Natural killer cell (primary cell): ENCODE measurements at regions of chr19 and their contacts with region 1.

Region 1: GRCh38 chr19:39212375-39212742 is 8.3 kb upstream of the SYCN start:
- DNase-seq: peak; percentile 51 to 76
- ATAC-seq: peak; percentile 71 to 89 (median 83)
- H3K4me3 ChIP-seq: no peak overlapping the region
- H3K4me3 Mint-ChIP-seq: no peak overlapping the region
- H3K27ac ChIP-seq: no peak overlapping the region
- H3K27ac Mint-ChIP-seq: no peak overlapping the region
- H3K4me1 ChIP-seq: no peaks in the 10 kb centered on the region
- H3K4me1 Mint-ChIP-seq: no peaks in the 10 kb centered on the region
- H3K27me3 ChIP-seq: no peaks in the 10 kb centered on the region
- H3K27me3 Mint-ChIP-seq: peaks cover 5 to 7% of the 10 kb centered on the region in 2 donors
- CTCF ChIP-seq: peak; percentile 36

Region 2: GRCh38 chr19:39052243-39052746 is 160.1 kb before region 1 on chr19:
- intact Hi-C with region 1: no loop called
- DNase-seq: peak; percentile 71 to 85
- ATAC-seq: peak; percentile 61 to 81 (median 75)
- H3K4me3 ChIP-seq: no peak overlapping the region
- H3K4me3 Mint-ChIP-seq: no peak overlapping the region
- H3K27ac ChIP-seq: no peak overlapping the region
- H3K27ac Mint-ChIP-seq: no peak overlapping the region
- H3K4me1 ChIP-seq: peaks cover 4% of the 10 kb centered on the region
- H3K4me1 Mint-ChIP-seq: no peaks in the 10 kb centered on the region
- H3K27me3 ChIP-seq: no peaks in the 10 kb centered on the region
- H3K27me3 Mint-ChIP-seq: peaks cover 6% of the 10 kb centered on the region in 2 donors
- CTCF ChIP-seq: peak; percentile 95

Region 3: DNA sequence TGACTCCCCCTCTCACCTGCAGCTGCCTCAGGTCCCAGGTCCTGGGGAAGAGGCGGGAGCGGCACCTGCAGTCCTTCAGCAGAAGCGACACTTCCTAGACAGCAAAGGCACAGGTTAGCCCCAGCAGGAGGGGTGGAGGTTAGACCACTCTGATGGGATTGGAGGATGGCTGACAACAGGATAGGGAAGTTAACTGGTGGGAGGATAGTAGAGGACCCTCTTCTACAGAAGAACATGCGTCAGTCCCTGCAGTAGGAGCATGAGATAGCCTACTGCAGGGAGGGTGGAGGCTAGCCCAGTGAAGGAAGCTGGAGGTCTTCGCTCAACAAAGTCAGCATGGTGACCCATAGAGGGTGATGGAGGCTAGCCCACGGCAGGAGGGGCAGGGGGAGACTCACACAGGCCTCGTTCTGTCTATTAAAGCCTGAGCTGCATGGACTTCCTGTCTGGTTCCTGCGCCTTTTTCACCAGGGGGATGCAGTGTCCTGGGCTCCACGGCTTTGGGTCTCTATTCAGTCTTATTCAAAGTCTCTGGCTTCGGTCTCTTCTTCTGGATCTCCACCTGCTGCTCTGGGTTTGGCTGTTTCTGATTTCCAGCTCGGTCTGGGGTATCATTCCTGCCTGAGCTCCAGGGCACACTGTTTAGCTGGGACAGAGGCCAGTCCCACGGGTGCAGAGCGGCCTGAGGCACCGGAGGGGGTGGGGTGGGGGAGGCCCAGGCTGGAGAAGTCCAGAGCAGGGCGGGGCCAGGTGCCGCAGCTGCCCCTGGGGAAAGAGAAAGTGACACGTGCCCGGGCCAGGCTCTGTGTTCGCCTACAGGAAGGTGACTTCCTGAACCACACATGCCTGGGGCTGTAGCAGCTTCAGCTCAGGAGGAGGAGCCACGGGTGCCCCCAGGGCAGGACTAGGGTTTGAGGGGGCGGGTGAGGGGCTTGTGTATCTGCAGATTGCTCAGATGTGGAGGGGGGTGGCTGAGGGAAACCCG is 25.1 kb after region 1 on chr19:
- intact Hi-C with region 1: no loop called
- DNase-seq: peak in 1 of 2 donors; percentile 60
- ATAC-seq: peak; percentile 35 to 68 (median 53)
- H3K4me3 ChIP-seq: no peak overlapping the region
- H3K4me3 Mint-ChIP-seq: peak overlapping the region; percentile 45
- H3K27ac ChIP-seq: peak overlapping the region; percentile 14
- H3K27ac Mint-ChIP-seq: peak overlapping the region in 1 of 2 donors; percentile 78
- H3K4me1 ChIP-seq: peaks cover 28% of the 10 kb centered on the region
- H3K4me1 Mint-ChIP-seq: peaks cover 19 to 30% of the 10 kb centered on the region in 2 donors
- H3K27me3 ChIP-seq: no peaks in the 10 kb centered on the region
- H3K27me3 Mint-ChIP-seq: no peaks in the 10 kb centered on the region
- CTCF ChIP-seq: no peak

Region 4: DNA sequence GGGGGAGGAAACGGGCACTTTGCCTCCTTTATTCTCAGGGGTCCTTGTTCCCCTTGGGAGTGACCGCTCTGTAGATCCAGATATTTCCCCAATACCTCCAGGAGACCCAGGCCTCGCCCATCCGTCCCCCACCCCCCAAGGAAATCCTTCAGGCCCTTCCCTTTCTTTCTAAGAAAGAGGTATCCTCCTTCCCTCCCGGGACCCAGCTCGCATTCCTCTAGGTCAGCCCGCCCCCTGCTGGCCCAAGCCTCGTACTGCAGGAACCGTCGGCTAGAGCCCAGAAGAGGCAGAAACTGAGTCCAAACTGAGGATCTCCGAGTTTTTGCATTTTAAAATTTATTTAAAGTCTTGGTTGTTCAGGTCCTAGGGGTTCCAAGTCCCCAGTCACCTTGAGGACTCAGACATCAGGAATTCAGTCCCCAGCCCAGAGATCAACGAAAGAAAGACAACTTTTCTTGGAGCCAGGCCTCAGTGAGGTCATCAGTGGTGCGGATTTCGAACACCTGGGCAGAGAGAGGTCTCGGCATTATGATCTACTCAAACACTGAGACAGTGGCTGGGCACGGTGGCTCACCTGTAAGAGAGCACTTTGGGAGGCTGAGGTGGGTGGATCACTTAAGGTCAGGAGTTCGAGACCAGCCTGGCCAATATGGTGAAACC is 115.8 kb after region 1 on chr19:
- intact Hi-C with region 1: loop called (anchors 1 kb)
- DNase-seq: peak; percentile 83 to 88
- ATAC-seq: peak; percentile 88 to 95 (median 89)
- H3K4me3 ChIP-seq: no peak overlapping the region
- H3K4me3 Mint-ChIP-seq: peak overlapping the region; percentile 28
- H3K27ac ChIP-seq: no peak overlapping the region
- H3K27ac Mint-ChIP-seq: peak overlapping the region; percentile 64 to 81
- H3K4me1 ChIP-seq: peaks cover 44% of the 10 kb centered on the region
- H3K4me1 Mint-ChIP-seq: peaks cover 23 to 29% of the 10 kb centered on the region in 2 donors
- H3K27me3 ChIP-seq: no peaks in the 10 kb centered on the region
- H3K27me3 Mint-ChIP-seq: no peaks in the 10 kb centered on the region
- CTCF ChIP-seq: peak; percentile 96